Tibial artery (tissue), 4 donors: ENCODE measurements at regions of chr11 and their contacts with region 1.

Region 1: DNA sequence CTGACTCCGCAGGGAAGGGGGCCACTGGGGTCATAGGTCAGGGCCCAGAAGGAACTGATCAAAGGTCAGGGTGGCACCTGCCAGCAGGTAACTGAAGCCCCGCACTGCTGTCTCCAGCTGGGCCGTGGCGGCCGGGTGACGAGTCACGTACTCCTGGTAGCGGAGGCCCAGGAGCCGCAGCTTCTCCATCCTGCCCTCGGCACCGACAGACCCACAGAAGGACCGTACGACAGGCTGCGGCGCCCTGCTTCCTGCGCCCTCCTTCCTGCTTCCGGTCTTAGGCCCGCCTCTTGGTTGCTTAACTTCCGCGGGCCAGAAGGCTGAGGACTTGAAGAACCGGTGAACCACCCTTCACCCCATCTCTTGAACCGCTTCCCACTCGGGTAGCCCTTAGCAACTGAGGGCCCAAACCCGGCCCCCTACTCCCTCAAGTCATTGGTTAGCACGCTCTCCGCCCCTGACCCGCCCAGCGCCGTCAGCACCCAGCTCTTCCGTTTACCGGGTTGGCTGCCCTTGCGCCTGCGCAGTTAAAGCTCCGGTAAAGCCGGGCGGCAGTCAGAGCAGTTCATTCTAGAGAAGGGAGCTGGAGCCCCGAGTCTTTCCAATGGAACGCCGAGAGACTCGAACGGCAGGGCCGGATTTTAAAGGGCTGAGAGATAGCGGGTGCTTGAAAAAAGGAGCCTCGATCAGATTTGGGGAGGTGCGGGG is at the start of gene PEX16:
- DNase-seq: peak; percentile 98 to 99
- H3K4me3 ChIP-seq: peak within 1 kb of the TSS; percentile 79 to 81
- H3K27ac ChIP-seq: peak within 1 kb of the TSS; percentile 87 to 89
- H3K4me1 ChIP-seq: peaks cover 10 to 45% (median 23%) of the 10 kb centered on the region in 4 donors
- H3K27me3 ChIP-seq: peaks cover 10 to 16% of the 10 kb centered on the region in 2 donors
- CTCF ChIP-seq: no peak

Region 2: DNA sequence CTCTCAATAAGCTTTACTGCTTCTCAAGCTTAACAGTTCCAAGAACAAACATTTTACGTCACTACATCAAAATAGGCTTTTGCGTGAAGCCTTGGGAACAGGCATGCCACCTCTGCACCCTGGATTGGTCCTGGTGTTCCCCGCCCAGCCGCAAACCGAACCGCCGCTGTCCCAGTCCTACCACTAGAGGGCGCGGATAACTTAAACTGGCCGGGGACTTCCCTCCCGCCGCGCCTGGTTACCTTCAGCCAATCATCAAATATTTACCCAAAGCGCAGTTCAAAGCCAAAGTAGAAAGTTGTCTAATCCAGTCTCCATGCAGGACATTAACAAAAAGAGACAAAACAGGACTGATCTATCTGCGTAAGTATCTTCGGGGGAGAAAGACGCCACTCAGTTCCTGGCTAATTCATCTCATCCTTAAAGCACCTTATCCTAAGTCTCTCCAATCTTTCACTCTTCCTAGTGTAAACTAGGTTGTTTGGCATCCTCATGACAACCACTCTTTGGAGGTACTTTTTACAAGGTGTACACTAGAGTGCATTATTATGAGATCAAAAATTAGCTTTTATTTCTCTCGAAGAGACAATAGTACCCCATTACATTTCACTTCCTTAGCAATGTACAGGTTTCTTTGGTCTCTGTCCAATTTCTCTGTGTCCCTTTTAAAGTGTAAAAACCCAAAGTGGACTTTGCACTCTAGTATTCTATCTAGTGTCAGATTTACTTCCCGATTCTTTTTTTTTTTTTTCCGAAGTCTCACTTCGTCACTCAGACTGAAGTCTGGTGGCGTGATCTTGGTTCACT is 74.5 kb before region 1 on chr11:
- intact Hi-C with region 1: loop called (anchors 5 kb)
- DNase-seq: peak; percentile 92 to 96
- H3K4me3 ChIP-seq: no peak overlapping the region
- H3K27ac ChIP-seq: peak overlapping the region in 1 of 2 donors; percentile 44
- H3K4me1 ChIP-seq: peaks cover 0 to 22% (median 11%) of the 10 kb centered on the region in 4 donors
- H3K27me3 ChIP-seq: no peaks in the 10 kb centered on the region
- CTCF ChIP-seq: peak; percentile 89 to 93

Region 3: DNA sequence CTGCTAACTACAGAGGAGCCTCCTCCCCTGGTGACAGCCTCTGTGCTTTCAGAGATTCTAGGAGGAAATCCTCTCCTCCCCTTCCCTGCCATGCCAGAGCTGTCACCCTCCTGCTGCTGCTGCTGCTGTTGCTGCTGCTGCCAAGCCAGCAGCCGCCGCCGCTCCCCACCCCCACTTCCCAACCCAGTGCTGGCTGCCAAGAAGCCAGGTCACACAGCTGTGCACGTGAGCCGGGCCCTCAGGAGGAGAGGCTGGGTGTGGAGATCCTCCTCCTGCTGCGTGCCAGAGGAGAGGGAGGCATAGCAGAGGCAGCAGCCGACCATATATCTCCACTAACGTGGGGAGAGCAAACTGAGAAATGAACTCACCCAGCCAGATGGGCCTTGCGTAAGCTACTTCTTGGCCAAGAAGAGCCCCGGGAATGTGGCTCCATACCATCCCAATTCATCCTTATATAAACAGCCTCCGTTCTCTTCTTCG is 58.1 kb before region 1 on chr11:
- intact Hi-C with region 1: loop called (anchors 5 kb)
- DNase-seq: peak; percentile 92 to 98
- H3K4me3 ChIP-seq: no peak overlapping the region
- H3K27ac ChIP-seq: peak overlapping the region; percentile 84 to 88
- H3K4me1 ChIP-seq: peaks cover 11 to 59% (median 54%) of the 10 kb centered on the region in 4 donors
- H3K27me3 ChIP-seq: no peaks in the 10 kb centered on the region
- CTCF ChIP-seq: no peak